A673 (cell line): ENCODE measurements at regions of chr5 and their contacts with region 1.

Region 1: GRCh38 chr5:172006321-172007174 is at the start of gene FBXW11:
- DNase-seq: peak; percentile 95
- H3K4me3 ChIP-seq: peak within 1 kb of the TSS; percentile 93
- H3K27ac ChIP-seq: peak within 1 kb of the TSS; percentile 99
- H3K4me1 ChIP-seq: peaks cover 11% of the 10 kb centered on the region
- H3K27me3 ChIP-seq: no peaks in the 10 kb centered on the region
- CTCF ChIP-seq: no peak
- total RNA-seq, gene FBXW11: 34.9 and 40.2 TPM in 2 replicates

Region 2: GRCh38 chr5:171913987-171914273 is 92.6 kb before region 1 on chr5:
- CTCF ChIA-PET with region 1: interaction called, 9 read pairs
- POLR2A ChIA-PET with region 1: no interaction called
- intact Hi-C with region 1: loop called (anchors 10 kb)
- DNase-seq: no peak
- H3K4me3 ChIP-seq: no peak overlapping the region
- H3K27ac ChIP-seq: no peak overlapping the region
- H3K4me1 ChIP-seq: no peaks in the 10 kb centered on the region
- H3K27me3 ChIP-seq: no peaks in the 10 kb centered on the region
- CTCF ChIP-seq: no peak

Region 3: DNA sequence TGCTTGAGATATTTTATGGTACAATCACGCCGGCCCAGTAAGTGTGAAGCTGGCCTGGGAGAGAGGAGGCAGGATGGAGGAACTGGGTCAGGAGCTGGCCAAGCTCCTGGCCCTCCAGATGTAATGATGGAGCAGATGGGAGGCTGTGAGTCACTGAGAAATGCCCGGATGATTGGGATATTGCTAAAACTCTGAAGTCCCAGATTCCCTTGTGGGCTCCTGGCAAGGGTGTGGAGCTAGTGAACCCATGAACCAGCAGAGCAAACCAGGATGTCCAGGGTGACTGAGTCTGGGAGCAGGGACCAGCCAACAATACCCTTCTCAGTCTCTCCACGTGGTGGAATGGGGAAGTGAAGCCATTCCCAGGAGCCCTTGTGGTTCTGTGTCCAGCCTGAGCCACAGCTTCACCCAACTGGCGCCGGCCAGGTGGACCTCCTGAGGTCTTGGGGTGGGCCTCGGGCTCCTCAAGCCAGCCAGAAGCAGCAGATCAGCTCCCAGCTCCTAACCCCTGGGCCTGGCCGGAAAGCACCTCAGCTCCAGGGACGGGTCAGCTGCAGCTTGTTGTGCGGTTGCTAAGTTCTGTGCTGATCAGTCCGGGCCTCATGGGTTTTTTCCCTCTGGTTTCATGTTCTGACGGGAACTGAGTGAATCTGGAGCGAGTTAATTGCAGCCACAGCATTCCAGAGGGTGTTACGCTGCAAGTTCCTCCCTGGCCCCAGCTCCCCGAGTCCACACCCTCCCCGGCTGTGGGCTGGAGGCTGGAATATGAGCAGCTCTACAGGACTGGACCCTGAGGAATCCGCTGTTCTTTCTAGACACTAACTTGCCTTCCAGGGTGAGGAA is 726.8 kb after region 1 on chr5:
- CTCF ChIA-PET with region 1: no interaction called
- POLR2A ChIA-PET with region 1: no interaction called
- intact Hi-C with region 1: no loop called
- DNase-seq: no peak
- H3K4me3 ChIP-seq: no peak overlapping the region
- H3K27ac ChIP-seq: no peak overlapping the region
- H3K4me1 ChIP-seq: no peaks in the 10 kb centered on the region
- H3K27me3 ChIP-seq: no peaks in the 10 kb centered on the region
- CTCF ChIP-seq: no peak